Heart left ventricle (tissue), 16 donors: ENCODE measurements at regions of chr15 and their contacts with region 1.

Region 1: GRCh38 chr15:41811432-41812195 is 16.3 kb upstream of the JMJD7 start:
- DNase-seq: peak; percentile 79 to 87 (median 86)
- ATAC-seq: peak; percentile 84 to 92 (median 91)
- H3K4me3 ChIP-seq: no peak overlapping the region
- H3K27ac ChIP-seq: no peak overlapping the region
- H3K4me1 ChIP-seq: peaks cover 0 to 12% (median 2%) of the 10 kb centered on the region in 12 donors
- H3K27me3 ChIP-seq: no peaks in the 10 kb centered on the region
- CTCF ChIP-seq: peak; percentile 77 to 95 (median 90)
- POLR2A ChIP-seq: no peak

Region 2: DNA sequence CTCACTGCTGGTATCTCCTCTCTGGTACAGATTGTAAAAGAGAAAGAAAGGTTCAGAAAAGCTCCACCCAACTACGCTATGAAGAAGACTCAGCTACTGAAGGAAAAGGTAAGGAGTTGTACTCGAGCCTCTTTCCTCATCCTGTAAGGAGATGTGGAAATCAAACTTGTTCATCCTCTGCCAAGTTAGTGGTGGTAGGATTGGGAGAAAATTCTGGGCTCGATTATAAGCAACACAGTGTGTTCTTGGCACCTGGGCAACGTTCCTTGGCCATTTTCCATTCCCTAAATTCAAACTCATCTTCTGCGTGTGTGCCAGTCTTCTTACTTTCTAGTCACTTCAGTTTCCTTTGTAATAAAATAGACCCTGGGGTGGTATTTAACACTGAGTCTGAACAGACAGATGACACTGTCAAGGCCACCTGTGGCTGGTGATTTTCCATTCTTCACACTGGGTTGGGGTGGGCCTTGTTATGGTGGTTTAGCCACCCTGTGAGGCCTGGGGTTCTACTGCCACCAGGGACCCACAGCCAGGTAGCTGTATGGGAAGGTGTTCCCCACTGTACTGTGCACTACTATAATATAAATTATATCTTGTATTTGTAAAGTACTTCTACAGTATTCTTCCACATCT is 335.1 kb before region 1 on chr15:
- intact Hi-C with region 1: loop called in 1 of 10 experiments (anchors 10 kb)
- DNase-seq: no peak
- ATAC-seq: peak in 1 of 4 donors; percentile 5
- H3K4me3 ChIP-seq: no peak overlapping the region
- H3K27ac ChIP-seq: peak overlapping the region in 8 of 12 donors; percentile 5 to 69 (median 36)
- H3K4me1 ChIP-seq: peaks cover 0 to 9% (median 0%) of the 10 kb centered on the region in 12 donors
- H3K27me3 ChIP-seq: no peaks in the 10 kb centered on the region
- CTCF ChIP-seq: no peak
- POLR2A ChIP-seq: no peak

Region 3: DNA sequence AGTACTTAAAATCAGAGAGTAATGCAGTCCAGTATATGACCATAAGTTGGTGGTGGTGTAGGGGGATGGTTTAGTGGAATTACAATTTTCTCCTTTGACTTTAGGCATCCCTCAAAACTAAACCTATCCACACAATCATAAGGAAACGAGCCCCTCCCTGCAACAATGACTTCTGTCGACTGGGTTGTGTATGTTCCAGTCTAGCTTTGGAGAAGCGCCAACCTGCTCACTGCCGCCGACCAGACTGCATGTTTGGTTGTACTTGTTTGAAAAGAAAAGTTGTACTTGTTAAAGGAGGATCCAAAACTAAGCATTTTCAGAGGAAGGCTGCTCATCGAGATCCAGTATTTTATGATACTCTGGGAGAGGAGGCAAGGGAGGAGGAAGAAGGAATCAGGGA is 98.6 kb before region 1 on chr15:
- intact Hi-C with region 1: no loop called
- DNase-seq: peak in 4 of 5 donors; percentile 31 to 45 (median 39)
- ATAC-seq: peak; percentile 44 to 66 (median 65)
- H3K4me3 ChIP-seq: no peak overlapping the region
- H3K27ac ChIP-seq: peak overlapping the region in 1 of 12 donors; percentile 16
- H3K4me1 ChIP-seq: peaks cover 0 to 18% (median 0%) of the 10 kb centered on the region in 12 donors
- H3K27me3 ChIP-seq: no peaks in the 10 kb centered on the region
- CTCF ChIP-seq: no peak
- POLR2A ChIP-seq: no peak